ENCODE measurements at regions of chr15 and their contacts with region 1.

Region 1: DNA sequence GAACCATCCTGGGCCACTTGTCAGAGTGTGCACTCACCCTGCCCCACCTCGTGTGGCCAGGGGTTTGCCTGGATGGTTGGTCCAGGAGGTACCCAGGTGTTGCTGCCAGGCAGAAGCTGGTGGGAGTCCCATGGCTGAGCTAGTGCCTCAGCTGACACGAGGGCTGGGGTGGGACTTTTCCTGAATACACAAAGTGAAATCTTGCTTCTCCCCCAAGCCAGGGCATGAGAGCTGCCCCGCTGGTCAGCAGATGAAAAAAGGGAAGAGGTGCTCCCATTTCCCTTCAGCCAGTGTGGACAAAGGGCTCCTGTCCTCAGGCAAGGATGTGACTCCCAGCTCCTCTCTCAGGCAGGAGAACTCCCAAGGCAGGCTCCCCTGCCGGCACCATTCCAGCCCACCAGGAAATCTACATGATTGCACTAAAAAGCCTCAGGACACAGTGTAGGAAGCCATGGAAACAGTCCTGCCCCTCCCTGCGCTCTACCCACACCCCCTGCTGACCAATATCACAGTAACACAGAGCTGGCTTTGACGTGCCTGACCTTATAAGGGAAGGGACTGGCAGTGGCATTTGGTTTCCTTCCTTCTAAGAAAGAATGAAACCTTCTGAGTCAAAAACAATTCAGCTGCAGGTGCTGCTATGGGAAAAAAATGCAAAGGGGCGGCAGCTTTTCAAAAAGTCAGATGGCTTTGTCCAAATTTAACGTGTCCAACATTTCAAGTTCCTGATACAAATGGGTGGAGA is 33.9 kb downstream of the MYO5C start:
- DNase-seq: no peak
- ATAC-seq: peak; percentile 64 to 82 (median 74)
- H3K4me3 ChIP-seq: no peak overlapping the region
- H3K27ac ChIP-seq: no peak overlapping the region
- H3K4me1 ChIP-seq: no peaks in the 10 kb centered on the region
- H3K27me3 ChIP-seq: no peaks in the 10 kb centered on the region
- CTCF ChIP-seq: peak in 1 of 4 donors; percentile 2
- POLR2A ChIP-seq: no peak

Region 2: DNA sequence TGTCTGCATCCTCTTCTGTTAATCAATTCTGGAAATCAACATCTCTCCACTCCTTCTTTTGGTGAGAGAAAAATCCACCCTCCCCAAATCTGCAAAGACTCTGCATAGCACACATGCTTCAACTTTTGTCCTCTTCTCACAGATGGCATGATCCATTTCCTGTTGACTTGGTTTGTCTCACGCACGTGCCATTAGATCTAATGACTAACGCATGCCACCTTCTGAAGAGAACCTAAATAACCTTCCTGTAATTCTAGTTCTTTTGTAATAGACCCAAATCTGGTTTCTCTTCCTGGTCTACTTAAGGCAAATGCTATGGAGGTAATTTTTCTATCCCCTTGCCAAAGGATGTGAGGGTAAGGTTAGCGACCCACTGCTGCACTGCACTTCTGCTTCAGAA is 468.5 kb after region 1 on chr15:
- intact Hi-C with region 1: loop called (anchors 5 to 10 kb)
- DNase-seq: no peak
- ATAC-seq: peak in 2 of 4 donors; percentile 27 to 32
- H3K4me3 ChIP-seq: no peak overlapping the region
- H3K27ac ChIP-seq: no peak overlapping the region
- H3K4me1 ChIP-seq: peaks cover 0 to 30% (median 15%) of the 10 kb centered on the region in 4 donors
- H3K27me3 ChIP-seq: no peaks in the 10 kb centered on the region
- CTCF ChIP-seq: no peak
- POLR2A ChIP-seq: no peak

Region 3: DNA sequence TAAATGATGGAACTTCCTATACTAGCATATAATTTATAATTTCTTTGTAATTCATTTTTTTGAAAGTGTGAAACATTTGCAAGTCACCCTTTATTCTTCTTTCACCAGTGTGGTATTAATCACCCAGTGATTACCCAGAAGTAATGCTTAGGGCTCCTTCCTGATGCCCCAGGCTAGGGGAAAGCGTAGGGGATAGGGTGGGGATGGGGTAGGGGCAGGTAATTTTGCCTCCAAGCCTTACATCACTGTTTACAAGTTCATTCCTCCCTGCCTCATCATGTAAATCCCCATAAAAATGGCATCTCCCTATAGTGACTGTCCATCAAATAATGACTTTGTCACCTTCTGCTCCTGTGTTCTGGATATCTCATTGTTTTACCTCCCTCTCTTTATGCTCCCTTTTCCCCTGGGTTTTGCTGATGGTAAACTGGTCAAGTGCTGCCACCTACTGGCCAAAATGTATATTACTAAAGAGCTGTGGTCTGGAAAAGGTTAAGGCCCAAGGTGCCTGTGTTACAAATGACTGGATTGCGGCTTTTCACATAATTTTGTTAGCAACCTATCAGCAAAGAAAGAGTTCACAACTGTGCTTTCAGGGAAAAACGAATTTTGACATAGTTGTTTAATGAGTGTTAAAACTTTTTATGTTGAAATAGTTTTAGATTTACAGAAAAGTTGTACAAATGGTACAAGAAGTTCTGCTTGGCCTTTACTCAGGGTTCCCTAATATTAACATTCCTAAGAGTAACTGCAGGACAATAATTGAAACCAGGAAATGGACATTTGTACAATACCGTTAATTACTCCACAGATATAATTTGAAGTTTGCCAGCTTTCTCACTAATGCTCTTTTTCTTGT is 473.8 kb after region 1 on chr15:
- intact Hi-C with region 1: loop called (anchors 5 to 10 kb)
- DNase-seq: peak in 1 of 3 donors; percentile 72
- ATAC-seq: peak; percentile 81 to 88 (median 85)
- H3K4me3 ChIP-seq: no peak overlapping the region
- H3K27ac ChIP-seq: no peak overlapping the region
- H3K4me1 ChIP-seq: peaks cover 0 to 30% (median 15%) of the 10 kb centered on the region in 4 donors
- H3K27me3 ChIP-seq: no peaks in the 10 kb centered on the region
- CTCF ChIP-seq: peak; percentile 83 to 93 (median 84)
- POLR2A ChIP-seq: no peak